WTC11 (cell line): ENCODE measurements at regions of chr9 and their contacts with region 1.

Region 1: GRCh38 chr9:78296893-78297671 is at the start of gene PSAT1:
- DNase-seq: peak; percentile 96
- ATAC-seq: peak; percentile 96
- H3K4me3 Mint-ChIP-seq: peak within 1 kb of the TSS; percentile 91
- H3K27ac Mint-ChIP-seq: peak within 1 kb of the TSS; percentile 97
- H3K4me1 Mint-ChIP-seq: peaks cover 31% of the 10 kb centered on the region
- H3K27me3 Mint-ChIP-seq: no peaks in the 10 kb centered on the region
- CTCF ChIP-seq: no peak
- total RNA-seq, gene PSAT1: 169 to 240 TPM (median 173 TPM) in 3 replicates

Region 2: DNA sequence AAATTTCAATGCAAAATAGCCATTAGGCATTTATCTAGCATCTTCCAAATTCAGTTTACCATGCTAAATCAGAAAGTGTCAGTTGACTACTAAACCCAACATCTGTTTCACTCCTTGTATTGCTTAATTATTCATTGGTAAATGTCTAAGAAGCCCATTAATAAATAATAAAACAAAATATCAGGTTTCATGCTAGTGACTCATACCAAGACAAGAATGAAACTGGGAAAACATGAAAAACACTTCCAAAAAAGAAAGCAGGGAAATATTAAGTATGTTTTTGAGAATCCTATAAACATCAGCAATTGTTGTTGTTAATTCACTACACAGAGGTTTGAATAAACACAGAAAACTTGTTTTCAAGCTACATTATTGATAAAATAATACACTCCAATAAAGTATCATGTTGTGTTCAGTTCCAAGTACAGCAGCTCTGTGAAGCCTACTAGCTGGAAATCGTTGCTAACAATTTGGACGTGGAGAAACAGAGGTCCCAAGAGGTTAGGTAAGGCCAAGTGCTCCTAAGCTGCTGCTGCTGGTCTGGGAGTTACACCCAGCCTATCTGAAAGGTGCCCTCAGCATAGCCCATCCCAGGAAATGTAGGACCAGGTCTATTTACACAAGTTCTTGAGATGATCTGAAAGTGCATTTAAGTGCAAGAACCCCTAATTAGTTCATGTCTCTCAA is 344.3 kb before region 1 on chr9:
- CTCF ChIA-PET with region 1: no interaction called
- POLR2A ChIA-PET with region 1: no interaction called
- DNase-seq: no peak
- ATAC-seq: no peak
- H3K4me3 Mint-ChIP-seq: no peak overlapping the region
- H3K27ac Mint-ChIP-seq: peak overlapping the region; percentile 16; the same call in 1 of the 2 replicates
- H3K4me1 Mint-ChIP-seq: peaks cover 79% of the 10 kb centered on the region
- H3K27me3 Mint-ChIP-seq: no peaks in the 10 kb centered on the region
- CTCF ChIP-seq: no peak

Region 3: DNA sequence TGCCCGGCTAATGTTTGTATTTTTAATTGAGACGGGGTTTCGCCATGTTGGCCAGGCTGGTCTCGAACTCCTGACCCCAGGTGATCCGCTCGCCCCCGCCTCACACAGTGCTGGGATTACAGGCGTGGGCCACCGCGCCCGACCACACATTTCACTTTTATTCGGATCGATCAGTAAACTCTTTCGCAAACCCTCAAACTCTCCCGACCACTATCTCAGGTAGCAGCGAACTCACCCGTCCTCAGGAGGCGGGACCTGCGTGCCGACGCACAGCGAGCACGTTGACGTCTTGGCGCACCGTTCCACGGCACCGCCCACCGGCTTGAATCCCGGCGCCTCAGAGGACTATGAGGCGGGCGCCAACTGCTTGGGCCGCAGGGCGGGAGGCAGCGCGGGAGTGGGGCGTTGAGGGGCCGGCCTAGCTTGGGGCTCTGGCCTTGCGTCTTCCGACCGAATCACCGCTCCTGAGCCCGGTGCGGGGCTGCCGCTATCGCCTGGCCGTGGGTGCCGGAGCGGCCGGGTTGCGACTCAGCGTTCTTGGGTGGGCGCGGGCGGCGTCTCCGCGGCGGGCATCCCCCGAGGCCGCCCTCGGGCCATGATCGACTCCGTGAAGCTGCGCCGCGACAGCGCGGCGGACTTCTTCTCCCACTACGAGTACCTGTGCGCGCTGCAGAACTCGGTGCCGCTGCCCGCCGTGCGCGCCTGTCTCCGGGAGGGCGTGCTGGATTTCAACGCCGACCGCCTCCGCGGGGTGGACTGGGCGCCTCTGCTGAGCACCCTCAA is 61.1 kb before region 1 on chr9 and contains the start of gene CEP78:
- CTCF ChIA-PET with region 1: interaction called, 4 read pairs
- POLR2A ChIA-PET with region 1: interaction called, 15 read pairs
- DNase-seq: peak; percentile 94
- ATAC-seq: peak; percentile 97
- H3K4me3 Mint-ChIP-seq: no peak within 1 kb of the TSS; the same call in 1 of the 2 replicates
- H3K27ac Mint-ChIP-seq: peak within 1 kb of the TSS; percentile 99
- H3K4me1 Mint-ChIP-seq: peaks cover 17% of the 10 kb centered on the region
- H3K27me3 Mint-ChIP-seq: no peaks in the 10 kb centered on the region
- CTCF ChIP-seq: no peak
- total RNA-seq, gene CEP78: 42.0 to 44.1 TPM (median 44.0 TPM) in 3 replicates

Region 4: DNA sequence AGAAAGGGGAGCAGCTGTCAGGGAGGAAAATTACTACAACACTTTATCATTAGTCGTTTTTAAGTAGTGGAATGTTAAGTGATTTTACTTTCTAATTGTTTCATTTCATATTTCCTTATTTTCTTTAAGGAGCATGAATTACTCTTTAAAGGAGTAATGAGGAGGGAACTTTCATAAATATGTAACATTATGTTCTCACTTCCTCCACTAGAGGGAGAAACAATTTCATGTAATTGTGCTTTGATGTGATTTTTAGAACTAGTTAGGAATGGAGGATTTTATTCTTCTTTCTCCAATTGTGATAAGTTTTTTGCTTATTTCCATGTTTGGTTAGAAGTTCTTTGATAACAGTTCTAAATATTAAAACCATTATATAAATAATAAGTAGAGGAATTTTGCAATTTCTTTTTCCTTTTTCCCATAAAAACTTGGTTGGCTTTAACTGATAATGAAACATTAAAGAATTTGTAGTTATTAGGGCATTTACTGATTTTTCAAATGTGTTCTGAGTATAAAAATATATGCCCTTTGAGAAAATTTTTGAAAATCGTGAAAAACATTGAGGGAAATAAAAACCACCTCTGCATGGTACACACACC is 35.6 kb before region 1 on chr9:
- CTCF ChIA-PET with region 1: interaction called, 3 read pairs
- POLR2A ChIA-PET with region 1: interaction called, 11 read pairs
- DNase-seq: no peak
- ATAC-seq: no peak
- H3K4me3 Mint-ChIP-seq: no peak overlapping the region
- H3K27ac Mint-ChIP-seq: no peak overlapping the region
- H3K4me1 Mint-ChIP-seq: no peaks in the 10 kb centered on the region
- H3K27me3 Mint-ChIP-seq: no peaks in the 10 kb centered on the region
- CTCF ChIP-seq: peak; percentile 28; the same call in 1 of the 2 replicates

Region 5: DNA sequence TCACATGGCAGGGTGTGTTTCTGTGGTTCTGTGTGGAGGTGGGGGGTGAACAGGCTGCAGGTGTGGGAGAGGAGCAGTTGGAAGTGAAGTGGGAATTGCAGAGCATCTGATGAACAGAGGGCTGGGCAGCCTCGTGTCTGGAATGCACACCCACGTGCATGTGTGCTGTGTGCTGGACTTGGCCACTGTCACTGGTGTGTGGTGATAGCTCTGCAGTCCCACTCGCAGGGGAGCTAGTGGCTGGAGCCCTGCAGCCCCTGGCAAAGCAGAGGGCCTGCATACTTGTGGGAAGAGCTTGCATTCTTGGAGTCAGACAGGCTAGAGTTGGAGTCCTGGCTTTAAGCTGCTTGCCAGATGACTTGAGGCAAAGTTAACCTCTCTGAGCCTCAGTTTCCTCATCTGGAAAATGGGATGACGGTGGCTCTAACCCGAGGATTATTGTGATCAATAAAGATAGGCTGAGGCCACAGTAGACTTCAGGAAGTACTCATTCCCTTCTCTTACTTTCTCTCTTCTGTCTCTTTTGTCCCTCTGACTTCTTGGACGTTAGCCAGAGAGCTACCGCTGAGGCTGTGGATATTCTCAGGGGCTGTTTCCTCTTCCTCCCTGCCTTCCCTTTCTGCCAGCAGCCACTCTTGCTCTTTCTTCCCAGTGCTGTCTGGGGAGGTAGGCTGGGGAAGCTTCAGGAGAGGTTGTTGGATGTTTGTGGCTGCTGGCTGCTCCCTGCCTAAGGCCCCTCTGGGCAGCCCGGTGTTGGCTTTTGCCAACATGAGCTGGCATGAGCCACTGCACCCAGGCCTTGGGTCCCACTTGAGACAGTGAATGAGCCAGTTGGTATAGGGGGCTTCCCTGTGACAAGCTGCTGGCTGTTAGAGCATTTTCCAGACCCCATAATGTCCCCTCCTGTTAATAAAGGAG is 18.1 kb after region 1 on chr9:
- CTCF ChIA-PET with region 1: no interaction called
- POLR2A ChIA-PET with region 1: interaction called, 24 read pairs
- DNase-seq: no peak
- ATAC-seq: no peak
- H3K4me3 Mint-ChIP-seq: no peak overlapping the region
- H3K27ac Mint-ChIP-seq: peak overlapping the region; percentile 94
- H3K4me1 Mint-ChIP-seq: peaks cover 8% of the 10 kb centered on the region; the same call in 1 of the 2 replicates
- H3K27me3 Mint-ChIP-seq: no peaks in the 10 kb centered on the region
- CTCF ChIP-seq: no peak

Region 6: DNA sequence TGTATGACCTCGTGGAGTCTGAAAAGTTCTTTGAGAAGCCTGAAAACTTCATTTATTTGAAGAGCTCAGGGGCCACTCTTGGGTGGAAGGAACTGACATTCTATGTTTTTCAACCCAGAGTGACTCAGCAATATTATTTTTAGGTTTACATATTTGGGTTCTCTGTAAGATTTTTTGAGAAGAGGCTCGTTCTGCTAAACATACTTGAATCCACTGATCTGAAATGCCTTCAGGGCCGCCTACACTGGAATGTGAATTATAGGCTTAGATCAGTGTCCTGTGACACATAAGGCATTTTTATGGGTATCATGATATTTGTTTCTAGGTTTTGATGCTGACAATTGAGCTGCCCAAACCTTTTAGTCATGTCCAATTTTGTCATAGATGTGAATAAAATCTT is 86.0 kb after region 1 on chr9:
- CTCF ChIA-PET with region 1: no interaction called
- POLR2A ChIA-PET with region 1: no interaction called
- DNase-seq: no peak
- ATAC-seq: no peak
- H3K4me3 Mint-ChIP-seq: no peak overlapping the region
- H3K27ac Mint-ChIP-seq: no peak overlapping the region
- H3K4me1 Mint-ChIP-seq: peaks cover 3% of the 10 kb centered on the region; the same call in 1 of the 2 replicates
- H3K27me3 Mint-ChIP-seq: no peaks in the 10 kb centered on the region; the same call in 1 of the 2 replicates
- CTCF ChIP-seq: no peak